ENCODE measurements at regions of chr1 and their contacts with region 1.

Region 1: DNA sequence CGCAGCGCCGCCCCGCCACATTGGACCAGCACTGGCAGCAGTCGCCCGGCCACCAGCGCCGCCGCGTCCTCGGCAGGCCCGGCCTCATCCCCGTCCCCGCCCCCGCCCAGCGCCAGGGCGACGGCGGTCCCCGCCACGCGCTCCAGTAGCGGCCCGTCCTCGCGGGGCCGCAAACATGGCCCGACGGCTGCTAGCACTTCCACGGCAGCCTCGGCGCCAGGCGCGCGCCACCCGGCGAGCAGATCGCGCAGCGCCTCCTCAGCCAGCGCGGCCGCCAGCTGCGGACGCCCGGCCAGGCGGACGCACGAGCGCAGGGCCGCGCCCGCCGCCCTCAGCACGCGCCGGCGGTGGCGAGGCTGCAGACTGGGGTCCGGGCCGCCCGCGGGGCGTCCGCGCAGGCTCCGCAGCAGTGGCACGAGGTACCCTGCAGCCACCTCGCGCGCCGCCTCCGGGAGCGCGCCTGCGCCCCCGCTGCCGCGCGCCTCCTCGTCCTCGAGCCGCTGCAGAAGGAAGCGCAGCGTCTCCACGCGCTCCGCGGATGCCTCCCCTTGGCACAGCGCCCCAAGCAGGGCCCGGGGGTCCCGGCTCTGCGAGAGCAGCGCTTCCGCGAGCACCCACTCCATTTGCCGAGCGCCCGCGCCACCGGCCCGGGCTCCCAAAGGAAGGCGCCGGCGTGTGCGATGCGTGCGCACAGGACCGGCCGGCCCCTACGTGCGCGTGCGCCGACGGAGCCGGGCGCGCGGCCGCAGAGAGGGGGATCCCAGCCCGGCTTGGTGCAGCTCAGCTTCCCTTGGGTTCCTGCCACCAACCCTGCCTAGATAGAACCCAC is at the start of gene TARBP1:
- DNase-seq: peak; percentile 46 to 92 (median 68)
- ATAC-seq: peak; percentile 69
- H3K4me3 ChIP-seq: peak within 1 kb of the TSS; percentile 64
- H3K4me3 Mint-ChIP-seq: peak within 1 kb of the TSS; percentile 90
- H3K27ac ChIP-seq: peak within 1 kb of the TSS in 1 of 2 donors; percentile 50
- H3K27ac Mint-ChIP-seq: peak within 1 kb of the TSS; percentile 92
- H3K4me1 ChIP-seq: peaks cover 19% of the 10 kb centered on the region
- H3K4me1 Mint-ChIP-seq: peaks cover 44% of the 10 kb centered on the region
- H3K27me3 ChIP-seq: no peaks in the 10 kb centered on the region
- H3K27me3 Mint-ChIP-seq: no peaks in the 10 kb centered on the region
- CTCF ChIP-seq: no peak
- total RNA-seq, gene TARBP1: 38.4 to 40.9 TPM

Region 2: GRCh38 chr1:235128456-235129328 is 650.0 kb after region 1 on chr1 and contains the start of gene TOMM20:
- CTCF ChIA-PET with region 1: no interaction called
- POLR2A ChIA-PET with region 1: interaction called, 16 read pairs
- intact Hi-C with region 1: no loop called
- DNase-seq: peak; percentile 86 to 99 (median 92)
- ATAC-seq: peak; percentile 91
- H3K4me3 ChIP-seq: peak within 1 kb of the TSS; percentile 86
- H3K4me3 Mint-ChIP-seq: peak within 1 kb of the TSS; percentile 98
- H3K27ac ChIP-seq: peak within 1 kb of the TSS; percentile 89 to 93
- H3K27ac Mint-ChIP-seq: peak within 1 kb of the TSS; percentile 98
- H3K4me1 ChIP-seq: peaks cover 38% of the 10 kb centered on the region
- H3K4me1 Mint-ChIP-seq: peaks cover 45% of the 10 kb centered on the region
- H3K27me3 ChIP-seq: no peaks in the 10 kb centered on the region
- H3K27me3 Mint-ChIP-seq: no peaks in the 10 kb centered on the region
- CTCF ChIP-seq: no peak
- total RNA-seq, gene TOMM20: 129 to 133 TPM

Region 3: DNA sequence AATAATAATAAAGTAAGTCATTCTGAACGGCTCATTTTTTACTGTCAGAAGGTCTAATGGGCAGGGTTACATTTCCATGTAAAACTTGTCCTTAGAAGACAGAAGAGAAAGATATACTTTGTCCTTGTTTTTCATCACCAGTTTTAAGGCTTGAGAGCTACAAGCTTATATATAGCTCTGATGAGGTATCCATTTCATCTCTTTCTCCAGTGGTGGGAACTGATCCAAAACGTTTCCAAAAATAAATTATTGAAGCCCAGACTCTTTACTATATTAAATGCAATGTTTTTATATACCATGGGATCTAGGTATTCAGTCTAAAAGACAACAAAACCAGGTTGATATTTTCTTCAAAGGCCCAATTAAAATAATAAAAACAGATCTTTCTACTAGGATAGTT is 1016.9 kb after region 1 on chr1:
- CTCF ChIA-PET with region 1: no interaction called
- POLR2A ChIA-PET with region 1: no interaction called
- intact Hi-C with region 1: loop called in 1 of 2 experiments (anchors 10 kb)
- DNase-seq: no peak
- ATAC-seq: no peak
- H3K4me3 ChIP-seq: no peak overlapping the region
- H3K4me3 Mint-ChIP-seq: no peak overlapping the region
- H3K27ac ChIP-seq: no peak overlapping the region
- H3K27ac Mint-ChIP-seq: no peak overlapping the region
- H3K4me1 ChIP-seq: peaks cover 5% of the 10 kb centered on the region
- H3K4me1 Mint-ChIP-seq: peaks cover 11% of the 10 kb centered on the region
- H3K27me3 ChIP-seq: no peaks in the 10 kb centered on the region
- H3K27me3 Mint-ChIP-seq: no peaks in the 10 kb centered on the region
- CTCF ChIP-seq: no peak

Measured in CD4-positive, alpha-beta T cell (primary cell).